ENCODE measurements at regions of chr7 and their contacts with region 1.

Region 1: GRCh38 chr7:25259587-25260243 is 31.4 kb upstream of the NPVF start:
- DNase-seq: peak; percentile 45
- H3K4me3 Mint-ChIP-seq: no peak overlapping the region
- H3K27ac Mint-ChIP-seq: no peak overlapping the region
- H3K4me1 Mint-ChIP-seq: peaks cover 26% of the 10 kb centered on the region
- H3K27me3 Mint-ChIP-seq: peaks cover 17% of the 10 kb centered on the region

Region 2: DNA sequence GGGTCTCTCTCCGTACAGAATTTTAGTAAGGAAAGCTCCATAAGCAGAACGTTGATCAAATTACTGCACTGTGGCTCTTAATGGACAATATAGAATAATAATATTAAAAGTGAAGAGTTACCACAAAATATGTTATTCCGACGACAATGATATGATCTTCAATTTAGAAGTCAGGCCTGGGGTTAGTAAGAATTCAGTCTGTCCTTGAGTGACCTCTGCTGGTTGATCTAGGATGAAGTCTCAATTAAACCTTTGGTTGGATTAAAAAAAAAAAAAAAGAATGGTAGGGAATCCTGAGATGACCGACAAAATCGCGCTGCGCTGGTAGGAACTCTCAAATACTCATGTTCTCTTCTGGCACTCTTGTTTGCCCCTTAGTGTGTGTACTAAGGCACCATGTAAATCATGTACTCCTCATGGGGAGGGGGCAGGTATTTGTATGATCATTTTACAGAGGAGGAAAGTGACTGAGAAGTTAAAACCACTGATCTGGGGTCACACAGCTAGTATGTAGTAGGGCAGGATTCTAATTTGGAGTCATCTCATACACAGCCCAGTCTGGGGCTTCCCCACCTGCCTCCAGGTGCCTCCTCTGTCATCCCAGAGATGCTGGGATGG is 129.9 kb after region 1 on chr7:
- intact Hi-C with region 1: loop called (anchors 1 kb)
- DNase-seq: no peak
- H3K4me3 Mint-ChIP-seq: no peak overlapping the region
- H3K27ac Mint-ChIP-seq: no peak overlapping the region
- H3K4me1 Mint-ChIP-seq: no peaks in the 10 kb centered on the region
- H3K27me3 Mint-ChIP-seq: peaks cover 13% of the 10 kb centered on the region